AG04450 (cell line): ENCODE measurements at regions of chr15 and their contacts with region 1.

Region 1: GRCh38 chr15:37891766-37892368 is 42.6 kb upstream of the TMCO5A start:
- DNase-seq: peak; percentile 37
- H3K4me3 ChIP-seq: no peak overlapping the region
- H3K27ac ChIP-seq: no peak overlapping the region
- H3K27me3 ChIP-seq: no peaks in the 10 kb centered on the region
- CTCF ChIP-seq: peak; percentile 94

Region 2: DNA sequence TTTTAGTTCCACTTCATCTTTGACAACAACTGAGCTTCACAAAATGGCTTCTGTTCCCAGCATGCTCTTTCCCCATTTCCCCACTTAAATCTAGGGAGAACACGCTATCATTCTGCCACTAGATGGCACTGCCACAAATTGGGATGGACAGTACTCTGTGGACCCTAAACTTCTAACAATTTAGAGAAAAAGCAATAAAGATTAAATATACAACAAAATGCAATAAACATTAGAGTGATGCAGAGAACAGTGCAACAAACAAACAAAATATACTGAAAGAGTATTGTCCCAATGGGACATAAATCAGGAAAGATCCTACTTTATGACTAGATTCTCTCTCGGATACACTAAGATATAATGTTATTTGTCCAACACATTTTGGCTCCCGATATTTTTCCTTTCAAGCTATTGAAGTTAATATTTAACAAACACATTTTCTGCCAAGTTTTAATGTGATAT is 127.1 kb before region 1 on chr15:
- CTCF ChIA-PET with region 1: interaction called, 23 read pairs
- POLR2A ChIA-PET with region 1: no interaction called
- DNase-seq: peak; percentile 15
- H3K4me3 ChIP-seq: no peak overlapping the region
- H3K27ac ChIP-seq: no peak overlapping the region
- H3K27me3 ChIP-seq: no peaks in the 10 kb centered on the region
- CTCF ChIP-seq: peak; percentile 72

Region 3: DNA sequence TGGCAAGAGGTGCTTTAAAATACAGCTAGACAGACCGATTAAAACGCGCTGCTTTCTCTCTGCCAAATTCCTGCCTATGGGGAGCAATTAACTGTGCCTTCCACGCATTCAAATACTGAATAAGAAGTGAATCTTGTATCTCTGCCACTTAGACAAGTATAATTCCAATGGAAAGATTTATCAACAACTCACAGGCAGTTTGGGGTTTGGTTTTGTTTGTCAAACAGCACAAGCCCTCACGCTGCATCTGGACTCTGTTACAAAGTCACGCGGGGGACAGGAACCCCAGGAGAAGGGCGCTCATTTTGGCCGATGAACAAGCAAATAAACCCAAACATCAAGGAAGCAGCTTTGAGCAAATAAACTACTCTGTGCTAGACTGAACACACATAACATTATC is 19.2 kb before region 1 on chr15:
- CTCF ChIA-PET with region 1: interaction called, 11 read pairs
- POLR2A ChIA-PET with region 1: no interaction called
- DNase-seq: no peak
- H3K4me3 ChIP-seq: no peak overlapping the region
- H3K27ac ChIP-seq: no peak overlapping the region
- H3K27me3 ChIP-seq: no peaks in the 10 kb centered on the region
- CTCF ChIP-seq: no peak

Region 4: DNA sequence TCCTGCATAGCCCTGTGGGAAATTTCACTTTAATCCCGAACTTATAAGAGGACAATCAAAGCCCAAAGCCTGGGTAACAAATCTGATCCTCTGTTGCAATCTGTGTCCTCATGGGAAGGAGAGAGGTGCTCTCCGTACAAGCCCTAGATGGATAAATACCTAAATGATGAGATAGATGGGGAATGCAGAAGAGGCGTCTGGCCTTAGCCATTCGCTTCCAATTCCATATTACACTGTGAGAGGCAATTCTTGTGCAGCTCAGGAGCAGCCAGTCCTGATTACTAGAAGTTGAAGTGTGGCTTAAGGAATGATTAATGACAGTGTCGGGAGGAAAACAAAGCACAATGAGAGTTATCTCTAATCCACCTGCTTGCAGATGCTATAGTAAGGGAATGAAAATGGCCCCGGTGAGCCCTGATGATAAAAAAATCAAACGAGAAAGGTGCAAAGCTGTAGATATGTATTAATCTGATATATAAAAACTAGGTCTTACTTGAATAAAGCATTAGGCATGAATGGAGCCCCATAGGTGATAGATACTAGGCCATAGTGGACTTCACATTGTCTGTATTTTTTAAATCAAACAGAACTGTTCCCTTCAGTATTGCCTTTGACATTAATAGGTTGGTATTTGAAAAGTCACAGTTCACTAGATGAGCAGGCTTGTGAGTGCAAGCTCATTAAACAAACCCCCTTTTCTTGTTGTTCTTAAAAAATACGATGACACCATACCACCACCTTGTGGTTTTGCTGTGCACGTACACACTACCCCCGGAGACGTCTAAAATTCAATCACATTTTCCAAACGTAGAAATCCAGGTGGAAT is 11.6 kb before region 1 on chr15:
- CTCF ChIA-PET with region 1: interaction called, 36 read pairs
- POLR2A ChIA-PET with region 1: no interaction called
- DNase-seq: peak; percentile 41
- H3K4me3 ChIP-seq: no peak overlapping the region
- H3K27ac ChIP-seq: no peak overlapping the region
- H3K27me3 ChIP-seq: no peaks in the 10 kb centered on the region
- CTCF ChIP-seq: peak; percentile 87

Region 5: DNA sequence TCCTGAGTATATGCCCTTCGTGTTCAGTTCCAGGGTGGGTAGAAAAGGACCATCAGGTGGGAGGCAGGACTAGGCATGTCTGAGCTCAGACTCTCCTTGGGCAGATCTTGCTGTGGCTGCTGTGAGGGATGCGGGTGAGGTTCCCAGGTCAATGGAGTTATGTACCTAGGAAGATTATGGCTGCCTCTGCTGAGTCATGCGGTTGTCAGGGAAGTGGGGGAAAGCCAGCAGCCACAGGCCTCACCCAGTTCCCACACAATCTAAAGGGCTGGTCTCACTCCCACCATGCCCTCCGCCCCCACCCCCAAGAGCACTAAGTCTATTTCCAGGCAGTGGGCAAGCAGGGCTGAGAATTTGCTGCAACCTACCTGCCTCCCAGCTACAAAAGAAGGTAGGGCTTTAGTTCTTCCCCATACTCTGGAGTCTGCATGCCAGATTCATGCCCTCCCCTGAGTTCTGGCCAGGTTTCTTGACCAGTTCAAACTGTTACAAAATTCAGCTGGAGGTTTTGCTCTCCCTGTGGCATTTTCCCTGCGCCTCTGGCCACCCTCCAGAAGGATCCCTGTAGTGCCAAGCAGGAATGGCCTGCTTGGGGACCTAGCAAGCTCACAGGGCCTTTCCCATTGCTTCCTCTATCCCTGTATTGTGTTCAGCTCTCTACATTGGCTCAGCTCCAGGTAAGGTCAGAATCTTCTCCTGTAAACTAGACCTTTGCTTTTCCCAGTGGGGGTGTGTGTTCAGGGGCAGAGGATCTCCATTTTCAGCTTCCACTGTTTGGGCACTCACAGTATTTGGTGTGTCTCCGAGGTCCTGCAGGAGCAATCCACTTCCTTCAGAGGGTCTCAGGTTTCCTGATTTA is 29.9 kb after region 1 on chr15:
- CTCF ChIA-PET with region 1: no interaction called
- POLR2A ChIA-PET with region 1: no interaction called
- DNase-seq: no peak
- H3K4me3 ChIP-seq: no peak overlapping the region
- H3K27ac ChIP-seq: no peak overlapping the region
- H3K27me3 ChIP-seq: no peaks in the 10 kb centered on the region
- CTCF ChIP-seq: no peak

Region 6: GRCh38 chr15:37940876-37941275 is 49.0 kb after region 1 on chr15:
- CTCF ChIA-PET with region 1: no interaction called
- POLR2A ChIA-PET with region 1: no interaction called
- DNase-seq: no peak
- H3K4me3 ChIP-seq: no peak overlapping the region
- H3K27ac ChIP-seq: no peak overlapping the region
- H3K27me3 ChIP-seq: no peaks in the 10 kb centered on the region
- CTCF ChIP-seq: no peak

Region 7: GRCh38 chr15:37981775-37982174 is 89.9 kb after region 1 on chr15:
- CTCF ChIA-PET with region 1: interaction called, 14 read pairs
- POLR2A ChIA-PET with region 1: no interaction called
- DNase-seq: no peak
- H3K4me3 ChIP-seq: no peak overlapping the region
- H3K27ac ChIP-seq: no peak overlapping the region
- H3K27me3 ChIP-seq: peaks cover 2% of the 10 kb centered on the region
- CTCF ChIP-seq: peak; percentile 68

Region 8: DNA sequence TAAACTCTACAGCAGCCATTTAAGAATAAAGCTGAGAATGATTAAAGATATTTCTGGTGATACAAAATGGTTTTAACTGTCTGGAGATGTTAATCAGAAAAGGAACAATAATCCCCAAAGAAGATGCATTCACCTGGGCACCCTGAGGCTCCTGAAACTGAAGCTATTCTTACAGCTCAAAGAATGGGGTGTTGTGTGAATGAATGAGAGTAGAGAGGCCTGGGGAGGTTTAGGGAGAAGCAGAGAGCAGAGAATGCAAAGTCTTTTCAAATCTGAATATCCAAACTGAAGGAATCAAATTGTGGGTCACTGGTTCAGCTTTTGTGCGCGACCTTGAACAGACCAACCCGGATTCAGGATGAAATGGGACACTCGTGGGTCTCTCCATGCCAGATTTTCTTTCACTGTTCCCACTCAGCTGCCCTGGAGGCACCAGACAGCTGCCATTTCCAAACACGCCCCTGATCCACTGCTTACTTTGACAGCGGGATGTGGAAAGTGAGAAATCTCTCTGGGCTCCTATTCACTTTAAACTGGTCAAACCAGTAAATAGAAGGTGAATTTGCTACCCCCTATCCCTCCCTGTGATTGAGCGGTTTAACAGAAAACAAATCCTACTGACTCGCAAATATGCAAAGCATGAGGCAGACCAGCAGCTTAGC is 1203.5 kb after region 1 on chr15:
- CTCF ChIA-PET with region 1: no interaction called
- POLR2A ChIA-PET with region 1: no interaction called
- DNase-seq: no peak
- H3K4me3 ChIP-seq: no peak overlapping the region
- H3K27ac ChIP-seq: no peak overlapping the region
- H3K27me3 ChIP-seq: no peaks in the 10 kb centered on the region
- CTCF ChIP-seq: no peak

Region 9: GRCh38 chr15:39202641-39203040 is 1310.8 kb after region 1 on chr15:
- CTCF ChIA-PET with region 1: no interaction called
- POLR2A ChIA-PET with region 1: no interaction called
- DNase-seq: no peak
- H3K4me3 ChIP-seq: no peak overlapping the region
- H3K27ac ChIP-seq: no peak overlapping the region
- H3K27me3 ChIP-seq: no peaks in the 10 kb centered on the region
- CTCF ChIP-seq: no peak